Left cardiac atrium (tissue), 4 donors: ENCODE measurements at regions of chr7 and their contacts with region 1.

Region 1: DNA sequence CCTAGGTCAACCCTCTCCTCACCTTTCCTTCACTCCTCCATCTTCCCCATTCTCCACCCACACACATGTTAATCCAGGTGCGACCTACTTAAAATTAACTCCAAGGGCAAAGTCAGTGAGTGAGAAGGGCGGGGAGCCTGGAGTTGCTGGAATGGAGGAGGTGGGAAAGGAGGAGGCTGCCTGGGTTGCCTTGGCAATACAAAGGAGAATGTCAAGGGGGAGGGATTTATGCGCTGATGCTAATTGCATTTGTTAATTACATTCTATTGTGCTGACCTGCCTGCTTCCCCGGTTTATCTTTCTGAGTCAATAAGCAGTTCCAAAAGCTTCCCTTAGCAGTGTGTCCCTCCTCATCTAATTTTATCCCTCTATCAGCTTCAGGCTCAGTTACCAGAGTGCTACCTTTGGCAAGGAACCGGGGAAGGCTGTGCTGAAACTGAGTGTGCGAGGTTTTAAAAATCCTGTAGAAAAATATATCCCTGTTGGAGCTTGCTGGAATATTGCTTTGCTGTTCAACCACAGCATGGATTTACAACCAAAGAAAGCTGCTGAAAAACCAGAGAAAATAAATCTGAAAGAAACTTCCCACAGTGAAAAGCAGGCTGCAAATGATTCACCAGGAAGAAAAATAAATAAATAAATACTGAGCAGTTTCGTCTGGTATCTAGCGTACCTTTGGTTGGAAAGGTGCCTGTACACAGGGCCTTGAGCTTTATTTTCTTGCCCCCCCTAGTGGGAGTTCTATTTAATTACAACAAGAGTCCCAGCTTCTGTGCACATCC is 113.2 kb upstream of the DGKB start:
- DNase-seq: peak; percentile 24
- ATAC-seq: peak; percentile 89 to 90

Region 2: DNA sequence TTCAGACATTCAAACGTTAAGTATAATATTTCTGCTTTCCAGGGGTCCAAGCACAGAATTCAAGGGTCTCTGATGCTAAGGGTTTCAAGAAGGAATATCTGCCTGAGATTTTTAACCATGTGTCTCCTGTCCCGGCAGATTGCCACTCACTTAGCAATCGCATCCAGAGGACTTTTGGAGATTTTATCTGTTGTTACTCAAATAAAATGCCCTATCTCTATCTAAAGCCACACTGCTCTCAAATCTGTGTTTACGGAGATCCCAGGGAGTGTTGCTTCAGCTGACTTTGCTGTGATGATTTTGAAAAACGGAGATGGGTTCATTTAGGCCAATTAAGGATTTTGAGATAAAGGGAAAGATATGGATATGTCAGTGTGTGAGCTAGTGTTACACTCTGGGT is 473.1 kb before region 1 on chr7:
- intact Hi-C with region 1: no loop called
- DNase-seq: no peak
- ATAC-seq: no peak

Region 3: DNA sequence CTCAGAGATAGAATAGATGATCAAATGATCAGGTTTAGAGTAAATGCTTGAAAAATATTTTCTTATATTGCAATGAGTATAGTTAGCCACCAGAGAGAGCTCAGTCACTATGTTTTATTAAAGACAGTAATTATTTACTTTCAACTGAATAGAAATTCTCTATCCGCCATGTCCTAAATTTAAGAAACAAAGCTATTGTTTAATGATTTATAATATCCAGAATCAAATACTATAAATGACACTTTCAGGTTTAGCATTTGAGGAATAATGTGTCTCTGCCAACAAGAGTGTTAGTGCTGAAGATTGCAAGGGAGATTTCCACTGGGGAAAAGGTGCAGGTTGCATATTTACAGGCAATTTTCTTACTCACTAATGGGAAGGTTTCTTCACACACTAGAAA is 297.9 kb before region 1 on chr7:
- intact Hi-C with region 1: loop called (anchors 1 to 5 kb)
- DNase-seq: no peak
- ATAC-seq: no peak

Region 4: DNA sequence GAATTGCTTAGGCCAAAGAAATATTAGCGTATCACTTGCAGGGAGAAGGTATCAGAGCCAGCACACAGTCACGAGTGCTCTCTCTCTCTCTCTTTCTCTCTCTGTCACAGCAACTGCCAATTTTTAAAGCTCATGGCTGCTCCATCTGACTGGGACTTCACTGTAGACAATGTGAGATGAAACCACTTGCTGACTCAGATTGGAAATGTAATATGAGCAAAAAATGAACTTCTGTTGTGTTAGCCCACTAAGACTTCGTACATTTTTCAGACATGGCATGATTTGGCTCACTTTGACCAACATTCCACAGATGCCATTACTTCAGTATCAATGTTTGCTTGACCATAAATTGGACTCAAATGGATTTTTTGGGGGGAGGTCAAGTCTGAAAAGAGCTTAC is 181.3 kb before region 1 on chr7:
- intact Hi-C with region 1: loop called in 1 of 2 experiments (anchors 5 kb)
- DNase-seq: no peak
- ATAC-seq: peak; percentile 65 to 82